IMR-90 (cell line): ENCODE measurements at regions of chr2 and their contacts with region 1.

Region 1: DNA sequence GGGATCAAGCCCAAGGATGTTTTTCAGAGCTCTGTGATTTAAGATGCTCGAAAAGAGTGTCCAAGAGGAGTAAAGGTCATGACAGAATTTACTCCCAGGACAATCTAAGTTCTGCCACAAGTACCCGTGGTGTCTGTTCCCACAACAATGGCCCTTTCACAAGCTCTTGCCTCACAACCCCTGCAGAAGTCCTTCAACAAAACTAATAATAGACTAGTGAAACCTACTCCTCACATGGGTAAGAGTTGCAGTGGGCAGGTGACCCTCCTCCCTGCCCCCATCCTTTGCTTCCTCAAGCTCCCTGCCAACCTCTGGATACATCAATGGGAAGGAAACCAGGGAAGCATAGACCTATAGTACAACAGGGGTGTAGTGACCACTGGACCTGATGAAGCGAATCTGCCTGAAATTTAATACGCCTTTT is 34.9 kb downstream of the PTCD3 start:
- DNase-seq: no peak
- ATAC-seq: no peak
- H3K4me3 ChIP-seq: no peak overlapping the region
- H3K27ac ChIP-seq: no peak overlapping the region
- H3K4me1 ChIP-seq: no peaks in the 10 kb centered on the region
- H3K27me3 ChIP-seq: no peaks in the 10 kb centered on the region
- CTCF ChIP-seq: no peak
- POLR2A ChIP-seq: no peak
- RAD21 ChIP-seq: no peak

Region 2: DNA sequence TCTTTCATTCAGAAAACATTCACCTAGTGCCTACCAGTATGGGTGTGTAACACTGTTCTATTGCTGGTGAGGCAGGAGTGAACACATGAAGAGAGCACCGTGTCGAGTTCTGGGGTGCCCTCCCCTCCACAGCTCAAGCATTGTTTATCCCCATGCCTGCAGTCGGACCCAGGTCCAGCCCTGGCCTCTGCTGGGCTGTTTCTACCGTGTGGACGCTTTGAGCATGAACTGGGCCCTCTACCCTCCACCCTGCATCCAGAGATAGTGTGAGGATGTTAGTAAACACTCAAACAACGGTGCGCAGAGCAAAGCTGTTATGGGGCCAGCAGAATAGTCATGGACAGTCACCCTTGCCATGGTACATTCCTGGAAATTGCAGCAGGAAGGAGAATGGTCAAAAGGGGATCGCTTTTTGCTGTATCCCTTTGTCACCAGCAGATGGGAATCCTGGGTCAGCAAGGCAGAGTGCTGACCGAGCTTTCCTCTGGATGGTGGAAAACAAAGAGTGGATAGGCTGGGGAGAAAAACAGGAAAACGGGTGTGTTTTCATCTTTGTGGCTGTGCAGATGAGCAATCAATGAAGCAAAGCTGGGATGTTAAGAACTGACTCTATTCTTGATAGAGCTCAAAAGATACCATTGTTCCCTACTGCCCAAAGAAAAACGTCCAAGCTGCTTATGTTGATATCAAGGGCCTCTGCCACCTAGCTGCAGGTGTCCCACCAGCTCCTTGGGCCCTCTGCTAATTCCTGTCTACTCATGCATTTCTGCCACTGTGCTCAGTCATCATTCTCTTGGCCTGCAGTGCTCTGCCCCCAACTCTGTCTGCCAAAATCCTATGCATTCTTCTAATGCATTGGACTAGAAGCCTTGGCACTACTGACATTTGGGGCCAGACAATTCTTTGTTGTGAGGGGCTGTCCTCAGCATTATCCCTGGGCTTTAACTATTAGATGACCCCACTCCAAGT is 157.7 kb after region 1 on chr2:
- CTCF ChIA-PET with region 1: no interaction called
- POLR2A ChIA-PET with region 1: no interaction called
- dilution Hi-C with region 1: no loop called
- in situ Hi-C with region 1: no loop called
- intact Hi-C with region 1: no loop called
- DNase-seq: no peak
- ATAC-seq: no peak
- H3K4me3 ChIP-seq: no peak overlapping the region
- H3K27ac ChIP-seq: no peak overlapping the region
- H3K4me1 ChIP-seq: no peaks in the 10 kb centered on the region
- H3K27me3 ChIP-seq: peaks cover 21% of the 10 kb centered on the region
- CTCF ChIP-seq: 0 out of 2 replicates have a peak, but pooled peaks have one; percentile 16
- POLR2A ChIP-seq: no peak
- RAD21 ChIP-seq: peak; percentile 11; the same call in 1 of the 2 replicates

Region 3: DNA sequence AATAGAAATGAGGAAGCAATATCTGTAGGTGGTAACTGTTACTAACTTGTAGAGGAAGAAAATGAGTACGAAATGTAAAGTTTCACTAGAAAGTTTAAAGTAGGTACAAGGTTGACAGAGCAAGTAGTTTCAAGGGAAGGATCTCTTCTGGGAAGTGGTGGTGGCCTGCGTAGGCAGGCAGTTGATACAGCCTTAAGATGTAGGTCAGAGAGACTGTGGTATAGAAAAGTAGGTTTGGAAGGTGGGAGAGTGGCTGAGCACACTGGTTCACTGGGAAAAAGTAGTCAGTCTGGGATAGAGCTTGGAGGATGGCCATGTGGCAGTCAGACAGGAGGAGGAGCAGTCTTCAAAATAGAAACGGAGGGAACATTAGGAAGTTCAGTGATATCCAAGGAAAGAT is 323.7 kb after region 1 on chr2:
- CTCF ChIA-PET with region 1: no interaction called
- POLR2A ChIA-PET with region 1: no interaction called
- dilution Hi-C with region 1: no loop called
- in situ Hi-C with region 1: no loop called
- intact Hi-C with region 1: loop called (anchors 10 kb)
- DNase-seq: no peak
- ATAC-seq: no peak
- H3K4me3 ChIP-seq: no peak overlapping the region
- H3K27ac ChIP-seq: no peak overlapping the region
- H3K4me1 ChIP-seq: no peaks in the 10 kb centered on the region; the same call in 1 of the 2 replicates
- H3K27me3 ChIP-seq: no peaks in the 10 kb centered on the region
- CTCF ChIP-seq: no peak
- POLR2A ChIP-seq: no peak
- RAD21 ChIP-seq: no peak